ENCODE measurements at regions of chr1 and their contacts with region 1.

Region 1: DNA sequence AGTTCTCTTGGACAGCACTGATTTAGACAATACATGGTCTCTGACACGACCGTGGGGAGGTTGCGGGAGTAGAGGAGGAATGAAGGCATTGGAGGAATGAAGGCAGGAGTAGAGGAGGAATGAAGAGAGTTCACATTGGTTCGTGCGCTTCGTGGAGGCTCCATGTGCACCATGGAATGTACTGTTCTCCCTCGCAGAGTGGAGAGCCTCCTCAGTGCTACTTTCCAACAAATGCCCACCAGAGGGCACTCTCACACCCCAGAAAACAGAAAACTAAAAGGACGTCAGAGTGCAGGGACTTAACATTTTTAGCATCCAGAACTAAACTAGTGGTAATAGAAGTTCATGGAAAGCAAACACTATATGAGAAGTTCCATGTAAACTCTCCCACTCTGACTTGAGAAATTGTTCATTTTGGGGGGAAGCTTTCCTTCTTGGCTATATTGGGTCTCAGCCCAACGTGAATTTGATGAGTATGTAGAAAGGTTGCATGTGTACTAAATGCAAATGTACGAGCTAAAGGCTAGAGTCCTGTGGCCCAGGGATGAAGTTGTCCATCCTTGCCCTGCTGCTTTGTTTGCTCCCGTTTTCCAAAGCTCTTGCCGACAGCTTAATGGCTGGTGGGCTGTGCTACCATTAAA is 211.6 kb downstream of the LMX1A start:
- DNase-seq: peak; percentile 36 to 80
- H3K4me3 ChIP-seq: no peak overlapping the region
- H3K27ac ChIP-seq: no peak overlapping the region
- H3K4me1 ChIP-seq: no peaks in the 10 kb centered on the region
- H3K27me3 ChIP-seq: peaks cover 0 to 2% (median 1%) of the 10 kb centered on the region in 4 experiments; a peak in 3 of 7 replicates
- CTCF ChIP-seq: peak; percentile 51 to 84 (median 83)
- EP300 ChIP-seq: no peak
- POLR2A ChIP-seq: no peak
- RAD21 ChIP-seq: peak; percentile 81 to 89

Region 2: DNA sequence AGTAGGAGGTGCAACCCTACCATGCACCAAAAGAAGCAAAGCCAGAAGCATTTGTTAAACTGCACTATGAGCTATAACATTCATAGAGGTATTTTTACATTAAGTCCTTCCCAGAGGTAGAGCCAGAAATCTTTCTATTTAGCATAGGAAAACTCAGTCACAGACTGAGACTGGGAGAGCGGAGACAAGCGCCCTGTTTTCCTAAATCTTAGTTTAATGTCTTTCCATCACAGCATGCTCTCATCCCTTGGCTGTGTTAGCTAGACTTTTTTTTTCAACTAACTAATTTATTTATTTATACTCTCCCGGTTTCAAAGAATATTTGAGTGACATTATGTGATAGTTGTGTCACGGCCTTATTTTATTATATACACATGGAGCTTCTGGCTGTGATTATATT is 92.4 kb before region 1 on chr1:
- CTCF ChIA-PET with region 1: no interaction called
- POLR2A ChIA-PET with region 1: no interaction called
- DNase-seq: no peak
- H3K4me3 ChIP-seq: no peak overlapping the region
- H3K27ac ChIP-seq: no peak overlapping the region
- H3K4me1 ChIP-seq: peaks cover 0 to 11% (median 3%) of the 10 kb centered on the region in 4 experiments; a peak in 6 of 7 replicates
- H3K27me3 ChIP-seq: no peaks in the 10 kb centered on the region; a peak in 1 of 7 replicates
- CTCF ChIP-seq: no peak
- EP300 ChIP-seq: no peak
- POLR2A ChIP-seq: no peak
- RAD21 ChIP-seq: no peak

Region 3: GRCh38 chr1:165114022-165114888 is 30.6 kb before region 1 on chr1:
- CTCF ChIA-PET with region 1: interaction called, 19 read pairs
- POLR2A ChIA-PET with region 1: no interaction called
- DNase-seq: peak; percentile 47 to 84
- H3K4me3 ChIP-seq: no peak overlapping the region
- H3K27ac ChIP-seq: no peak overlapping the region
- H3K4me1 ChIP-seq: peaks cover 0 to 7% (median 3%) of the 10 kb centered on the region in 4 experiments; a peak in 4 of 7 replicates
- H3K27me3 ChIP-seq: peaks cover 20 to 42% (median 29%) of the 10 kb centered on the region in 4 experiments
- CTCF ChIP-seq: peak in 2 of 3 experiments; percentile 72; a peak in 3 of 4 replicates
- EP300 ChIP-seq: no peak
- POLR2A ChIP-seq: no peak
- RAD21 ChIP-seq: peak; percentile 81 to 88

Region 4: DNA sequence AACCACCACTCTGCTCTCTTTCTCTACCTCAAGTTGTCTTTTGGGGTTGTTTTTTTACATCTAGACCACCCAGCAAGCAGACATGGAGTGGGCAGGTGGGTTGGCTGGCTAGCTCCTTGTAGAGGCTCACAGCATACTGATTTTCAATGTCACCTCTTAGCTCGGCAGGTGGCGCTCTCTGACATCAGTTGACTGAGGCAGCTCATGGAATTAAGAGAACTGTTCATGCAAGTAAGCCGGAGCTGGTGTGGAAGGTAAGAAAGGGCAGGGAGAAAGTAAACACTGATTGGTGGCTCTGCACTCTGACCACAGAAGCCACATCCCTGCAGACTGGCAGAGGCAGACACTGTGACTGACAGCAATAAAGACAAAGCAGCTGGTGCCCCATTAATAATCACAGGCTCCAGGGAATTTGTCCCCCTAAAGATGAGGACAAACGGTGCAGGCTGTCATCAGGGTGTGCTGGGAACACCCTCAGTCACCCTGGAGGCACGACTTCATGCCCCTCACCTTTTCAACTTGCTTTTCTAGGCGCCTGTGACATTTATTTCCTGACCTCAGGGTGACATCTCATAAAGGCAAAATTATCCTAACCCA is 15.2 kb before region 1 on chr1:
- CTCF ChIA-PET with region 1: interaction called, 32 read pairs
- POLR2A ChIA-PET with region 1: no interaction called
- DNase-seq: peak; percentile 53 to 87
- H3K4me3 ChIP-seq: no peak overlapping the region
- H3K27ac ChIP-seq: no peak overlapping the region
- H3K4me1 ChIP-seq: no peaks in the 10 kb centered on the region
- H3K27me3 ChIP-seq: no peaks in the 10 kb centered on the region
- CTCF ChIP-seq: peak; percentile 68 to 92 (median 83)
- EP300 ChIP-seq: no peak
- POLR2A ChIP-seq: no peak
- RAD21 ChIP-seq: peak; percentile 84 to 86

Region 5: GRCh38 chr1:165162671-165163241 is 17.9 kb after region 1 on chr1:
- CTCF ChIA-PET with region 1: interaction called, 12 read pairs
- POLR2A ChIA-PET with region 1: no interaction called
- DNase-seq: peak in 1 of 2 experiments; percentile 49
- H3K4me3 ChIP-seq: no peak overlapping the region
- H3K27ac ChIP-seq: no peak overlapping the region
- H3K4me1 ChIP-seq: no peaks in the 10 kb centered on the region
- H3K27me3 ChIP-seq: no peaks in the 10 kb centered on the region; a peak in 1 of 7 replicates
- CTCF ChIP-seq: no peak
- EP300 ChIP-seq: no peak
- POLR2A ChIP-seq: no peak
- RAD21 ChIP-seq: no peak

Region 6: DNA sequence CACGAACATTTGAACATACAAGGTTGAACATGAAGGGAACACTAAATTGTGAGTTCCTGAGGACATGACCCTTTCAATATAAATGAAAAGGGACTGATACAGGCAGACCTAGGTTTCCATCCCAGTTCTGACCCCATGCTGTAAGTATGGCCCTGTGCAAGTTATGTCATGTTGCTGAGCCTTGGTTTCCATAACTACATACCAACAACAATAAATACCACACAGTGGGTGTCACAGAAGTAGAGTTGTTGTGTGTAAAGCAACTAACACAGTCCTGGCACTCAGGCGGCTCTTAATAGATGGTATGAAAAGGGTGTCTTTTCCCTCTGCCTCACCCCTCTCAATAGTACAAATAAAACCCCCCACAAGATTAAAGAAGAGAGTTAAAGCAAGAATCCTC is 70.8 kb after region 1 on chr1:
- CTCF ChIA-PET with region 1: interaction called, 10 read pairs
- POLR2A ChIA-PET with region 1: no interaction called
- DNase-seq: no peak
- H3K4me3 ChIP-seq: no peak overlapping the region
- H3K27ac ChIP-seq: no peak overlapping the region
- H3K4me1 ChIP-seq: peaks cover 2 to 13% (median 7%) of the 10 kb centered on the region in 4 experiments; a peak in 4 of 7 replicates
- H3K27me3 ChIP-seq: no peaks in the 10 kb centered on the region
- CTCF ChIP-seq: no peak
- EP300 ChIP-seq: no peak
- POLR2A ChIP-seq: no peak
- RAD21 ChIP-seq: no peak

Region 7: GRCh38 chr1:165248969-165249571 is 104.2 kb after region 1 on chr1:
- CTCF ChIA-PET with region 1: interaction called, 20 read pairs
- POLR2A ChIA-PET with region 1: no interaction called
- DNase-seq: no peak
- H3K4me3 ChIP-seq: no peak overlapping the region
- H3K27ac ChIP-seq: no peak overlapping the region
- H3K4me1 ChIP-seq: peaks cover 0 to 7% (median 5%) of the 10 kb centered on the region in 4 experiments; a peak in 4 of 7 replicates
- H3K27me3 ChIP-seq: no peaks in the 10 kb centered on the region; a peak in 1 of 7 replicates
- CTCF ChIP-seq: no peak
- EP300 ChIP-seq: no peak
- POLR2A ChIP-seq: no peak
- RAD21 ChIP-seq: no peak